Panc1 (cell line): ENCODE measurements at regions of chr14 and their contacts with region 1.

Region 1: DNA sequence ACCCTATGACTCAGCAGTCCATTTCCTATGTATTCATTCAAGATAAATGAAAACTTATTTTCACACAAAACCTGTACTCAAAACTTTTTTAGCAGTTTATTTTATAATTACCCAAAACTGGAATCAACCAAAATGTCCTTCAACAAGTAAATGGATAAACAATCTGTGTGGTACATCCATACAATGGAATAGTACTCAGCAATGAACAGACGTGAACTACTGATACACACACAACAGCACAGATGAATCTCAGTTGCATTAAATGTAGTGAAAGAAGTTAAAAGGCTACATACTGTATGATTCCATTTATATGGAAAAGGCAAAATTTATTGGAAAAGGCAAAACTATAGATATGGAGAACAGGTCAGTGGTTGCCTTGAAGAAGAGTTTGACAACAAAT is 90.1 kb downstream of the KIAA0586 start:
- DNase-seq: no peak
- ATAC-seq: no peak
- H3K4me3 ChIP-seq: no peak overlapping the region
- H3K27ac ChIP-seq: no peak overlapping the region
- H3K4me1 ChIP-seq: no peaks in the 10 kb centered on the region
- H3K27me3 ChIP-seq: no peaks in the 10 kb centered on the region
- CTCF ChIP-seq: no peak

Region 2: GRCh38 chr14:58677996-58678395 is 160.4 kb after region 1 on chr14:
- CTCF ChIA-PET with region 1: no interaction called
- POLR2A ChIA-PET with region 1: interaction called, 21 read pairs
- in situ Hi-C with region 1: no loop called
- intact Hi-C with region 1: no loop called
- DNase-seq: no peak
- ATAC-seq: no peak
- H3K4me3 ChIP-seq: no peak overlapping the region
- H3K27ac ChIP-seq: no peak overlapping the region
- H3K4me1 ChIP-seq: no peaks in the 10 kb centered on the region
- H3K27me3 ChIP-seq: no peaks in the 10 kb centered on the region; the same call in 1 of the 2 replicates
- CTCF ChIP-seq: no peak